ENCODE measurements at regions of chr17 and their contacts with region 1.

Region 1: DNA sequence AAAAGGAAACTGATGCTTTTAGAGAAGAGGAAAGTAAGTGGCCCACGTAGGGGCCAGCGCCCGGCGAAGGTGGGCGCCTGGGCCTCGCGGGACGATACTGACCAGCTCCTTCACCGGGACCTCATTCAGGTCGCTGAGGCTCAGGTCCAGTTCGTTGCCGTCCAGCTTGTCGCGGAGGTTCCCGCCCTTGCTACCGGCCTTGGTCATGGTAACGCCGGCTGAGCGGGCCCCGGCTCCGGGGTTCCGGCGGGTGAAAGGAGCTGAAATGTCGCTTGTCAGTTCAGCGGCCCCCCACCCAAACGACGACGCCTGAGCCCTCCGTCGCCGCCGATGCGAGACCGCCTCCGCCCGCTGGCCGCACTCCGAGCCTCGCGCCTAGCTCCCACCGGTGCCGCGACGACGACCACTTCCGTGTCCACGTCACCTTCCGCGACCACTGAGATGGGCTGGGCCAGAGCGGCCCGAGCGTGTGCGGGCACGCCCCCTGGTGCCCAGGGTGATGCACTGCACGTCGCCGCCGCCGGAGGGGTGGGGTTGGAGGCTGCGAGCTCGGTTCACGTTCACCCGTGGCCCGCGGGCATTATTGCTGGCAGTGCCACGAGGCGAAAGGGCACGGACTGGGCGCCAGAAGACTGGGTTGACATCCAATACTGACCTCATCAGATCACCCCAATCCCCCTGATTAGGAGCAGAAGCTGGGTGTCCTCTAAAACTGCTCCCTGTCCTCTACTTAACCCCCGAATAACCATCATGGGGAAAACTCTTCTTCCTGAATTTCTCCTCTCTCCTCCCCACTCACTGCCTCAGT is at the start of gene LRRC59:
- H3K4me3 ChIP-seq: peak within 1 kb of the TSS; percentile 74
- H3K27ac ChIP-seq: peak within 1 kb of the TSS; percentile 81
- H3K4me1 ChIP-seq: peaks cover 9% of the 10 kb centered on the region
- CTCF ChIP-seq: peak; percentile 100

Region 2: GRCh38 chr17:50206604-50207293 is 190.6 kb before region 1 on chr17:
- CTCF ChIA-PET with region 1: no interaction called
- POLR2A ChIA-PET with region 1: no interaction called
- H3K4me3 ChIP-seq: no peak overlapping the region
- H3K27ac ChIP-seq: no peak overlapping the region
- H3K4me1 ChIP-seq: peaks cover 3% of the 10 kb centered on the region; the same call in 1 of the 2 replicates
- CTCF ChIP-seq: no peak

Region 3: DNA sequence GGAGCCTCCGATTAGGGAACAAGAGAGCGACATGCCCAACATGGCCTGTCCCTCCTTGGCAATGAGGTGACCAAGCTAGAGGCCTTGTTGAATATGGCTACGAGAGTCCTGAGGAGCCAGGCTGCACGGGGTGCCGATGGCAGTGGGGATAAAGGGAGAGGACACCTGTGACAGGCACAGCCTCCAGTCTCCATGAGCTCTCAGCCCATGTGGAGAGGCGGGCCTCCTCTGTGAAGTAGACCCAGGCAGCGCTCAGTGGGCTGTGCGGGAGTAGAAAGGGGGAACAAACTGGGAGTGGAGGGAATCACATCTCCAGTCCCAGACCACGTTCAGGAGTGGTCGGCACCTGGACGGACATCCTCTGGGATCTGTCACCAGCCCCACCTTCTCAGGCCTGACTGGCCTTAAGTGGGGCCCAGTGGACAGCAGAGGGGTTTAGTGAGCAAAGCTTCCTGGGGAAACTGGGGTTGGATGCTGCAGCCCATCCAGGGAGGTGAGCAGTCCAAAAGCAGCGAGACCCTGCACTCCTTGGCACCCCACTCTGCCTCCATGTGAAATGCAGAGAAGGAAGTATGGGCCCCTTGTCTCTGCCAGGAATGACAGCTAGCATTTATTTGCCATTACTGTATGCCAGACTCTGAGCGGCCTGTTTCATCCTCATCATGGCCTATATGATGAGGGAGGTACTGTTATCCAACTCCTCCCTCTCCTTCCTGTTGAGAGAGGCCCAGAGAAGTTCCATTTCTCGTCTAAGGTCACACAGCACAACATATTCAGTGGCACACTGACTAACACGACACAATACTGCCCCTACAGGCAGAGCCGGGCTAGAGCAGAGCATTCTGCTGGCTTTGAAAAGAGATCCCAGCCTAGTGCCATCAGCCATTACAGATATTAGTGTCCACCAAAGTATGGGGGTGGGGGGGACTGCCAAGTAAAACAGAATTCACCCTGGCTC is 127.6 kb before region 1 on chr17:
- CTCF ChIA-PET with region 1: no interaction called
- POLR2A ChIA-PET with region 1: no interaction called
- H3K4me3 ChIP-seq: no peak overlapping the region
- H3K27ac ChIP-seq: no peak overlapping the region
- H3K4me1 ChIP-seq: peaks cover 12% of the 10 kb centered on the region
- CTCF ChIP-seq: peak; percentile 31; the same call in 1 of the 2 replicates

Region 4: DNA sequence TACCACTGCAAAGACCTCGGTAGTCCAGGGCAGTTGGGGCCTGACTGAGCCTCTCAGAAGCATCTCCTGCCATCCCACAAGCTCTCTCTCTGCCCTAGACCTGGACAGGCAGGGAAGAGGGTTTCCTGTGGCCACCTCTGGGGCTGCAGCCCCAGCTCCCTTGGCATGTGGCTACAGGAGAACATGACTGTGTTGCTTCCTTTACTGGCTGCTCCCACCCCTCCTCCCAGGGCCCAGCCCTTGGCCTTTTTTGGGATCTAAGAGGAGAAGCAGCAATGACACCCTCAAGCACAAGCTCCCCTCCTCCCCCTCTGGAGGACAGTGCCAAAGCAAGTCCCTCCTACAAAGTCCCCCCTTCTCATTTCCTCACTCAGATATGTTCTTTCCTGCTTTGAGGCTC is 29.9 kb before region 1 on chr17:
- CTCF ChIA-PET with region 1: interaction called, 54 read pairs
- POLR2A ChIA-PET with region 1: interaction called, 5 read pairs
- H3K4me3 ChIP-seq: no peak overlapping the region
- H3K27ac ChIP-seq: no peak overlapping the region
- H3K4me1 ChIP-seq: peaks cover 13% of the 10 kb centered on the region
- CTCF ChIP-seq: no peak

Region 5: GRCh38 chr17:50380369-50381259 is 16.7 kb before region 1 on chr17:
- CTCF ChIA-PET with region 1: interaction called, 69 read pairs
- POLR2A ChIA-PET with region 1: interaction called, 41 read pairs
- H3K4me3 ChIP-seq: no peak overlapping the region
- H3K27ac ChIP-seq: no peak overlapping the region
- H3K4me1 ChIP-seq: no peaks in the 10 kb centered on the region
- CTCF ChIP-seq: no peak

Region 6: DNA sequence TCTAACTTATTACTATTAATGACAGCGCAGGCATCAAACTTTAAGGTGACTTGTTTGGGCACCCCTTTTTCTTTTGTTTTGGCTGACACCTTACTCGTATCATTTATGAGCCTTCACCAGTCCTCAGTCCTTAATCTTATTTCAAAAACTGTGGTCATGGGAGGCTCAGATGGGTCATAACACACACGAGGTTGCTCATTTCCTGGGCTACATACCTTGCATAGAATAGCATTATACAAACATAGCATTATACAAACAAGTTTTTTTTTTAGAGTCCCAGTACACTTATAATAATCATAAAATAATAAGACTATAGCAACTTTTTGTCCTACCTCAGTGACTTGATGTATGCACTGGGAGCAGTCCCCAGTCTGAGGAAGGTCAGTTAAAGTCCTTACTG is 17.5 kb after region 1 on chr17:
- CTCF ChIA-PET with region 1: interaction called, 36 read pairs
- POLR2A ChIA-PET with region 1: interaction called, 8 read pairs
- H3K4me3 ChIP-seq: no peak overlapping the region
- H3K27ac ChIP-seq: no peak overlapping the region
- H3K4me1 ChIP-seq: no peaks in the 10 kb centered on the region
- CTCF ChIP-seq: no peak

Region 7: GRCh38 chr17:50437409-50437808 is 40.1 kb after region 1 on chr17:
- CTCF ChIA-PET with region 1: interaction called, 71 read pairs
- POLR2A ChIA-PET with region 1: interaction called, 4 read pairs
- H3K4me3 ChIP-seq: no peak overlapping the region
- H3K27ac ChIP-seq: no peak overlapping the region
- H3K4me1 ChIP-seq: no peaks in the 10 kb centered on the region; the same call in 1 of the 2 replicates
- CTCF ChIP-seq: no peak

Region 8: GRCh38 chr17:50458701-50459676 is 61.7 kb after region 1 on chr17:
- CTCF ChIA-PET with region 1: interaction called, 16 read pairs
- POLR2A ChIA-PET with region 1: interaction called, 5 read pairs
- H3K4me3 ChIP-seq: no peak overlapping the region
- H3K27ac ChIP-seq: peak overlapping the region; percentile 25; the same call in 1 of the 2 replicates
- H3K4me1 ChIP-seq: peaks cover 17% of the 10 kb centered on the region
- CTCF ChIP-seq: no peak

Measured in HEK293 (cell line).